ENCODE measurements at regions of chr11 and their contacts with region 1.

Region 1: DNA sequence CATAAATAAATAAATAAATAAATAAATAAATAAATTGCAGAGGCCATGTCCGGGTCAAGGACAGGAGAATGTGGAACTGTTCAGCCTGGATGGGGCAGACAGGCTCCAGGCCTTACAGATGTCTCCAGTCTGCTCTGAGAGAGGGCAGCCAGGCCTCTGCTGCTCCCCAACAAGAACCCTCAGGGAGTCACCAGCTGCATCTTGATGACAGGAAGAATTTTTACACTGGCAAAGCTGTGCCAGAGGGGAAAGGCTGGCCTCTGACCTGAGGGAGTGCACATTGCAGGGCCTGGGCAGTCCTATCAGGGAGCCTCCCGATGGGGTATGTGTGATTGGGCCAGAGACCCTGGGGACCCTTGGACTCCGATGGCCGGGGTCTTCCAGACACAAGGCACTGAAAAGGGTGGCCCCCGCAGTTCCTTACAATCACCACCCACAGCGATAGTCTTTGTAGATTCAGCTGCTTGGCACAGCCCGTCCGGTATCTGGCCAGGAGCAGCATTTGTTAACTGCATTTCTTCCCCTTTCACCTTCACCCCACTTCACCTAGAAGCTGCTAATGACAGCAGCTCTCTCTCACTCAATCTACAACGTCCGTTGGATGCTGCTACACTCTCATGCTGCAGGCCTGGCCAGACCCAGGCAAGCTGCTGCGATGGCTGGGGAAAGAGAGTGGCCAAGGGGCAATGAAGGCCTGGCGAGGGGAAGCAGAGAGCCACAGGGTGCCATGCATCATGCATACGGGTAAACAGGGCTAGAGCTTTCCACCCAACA is 8.1 kb downstream of the MOGAT2 start:
- DNase-seq: no peak
- ATAC-seq: peak; percentile 49

Region 2: GRCh38 chr11:74769055-74769707 is 956.6 kb before region 1 on chr11:
- intact Hi-C with region 1: loop called (anchors 5 kb)
- DNase-seq: no peak
- ATAC-seq: no peak

Region 3: DNA sequence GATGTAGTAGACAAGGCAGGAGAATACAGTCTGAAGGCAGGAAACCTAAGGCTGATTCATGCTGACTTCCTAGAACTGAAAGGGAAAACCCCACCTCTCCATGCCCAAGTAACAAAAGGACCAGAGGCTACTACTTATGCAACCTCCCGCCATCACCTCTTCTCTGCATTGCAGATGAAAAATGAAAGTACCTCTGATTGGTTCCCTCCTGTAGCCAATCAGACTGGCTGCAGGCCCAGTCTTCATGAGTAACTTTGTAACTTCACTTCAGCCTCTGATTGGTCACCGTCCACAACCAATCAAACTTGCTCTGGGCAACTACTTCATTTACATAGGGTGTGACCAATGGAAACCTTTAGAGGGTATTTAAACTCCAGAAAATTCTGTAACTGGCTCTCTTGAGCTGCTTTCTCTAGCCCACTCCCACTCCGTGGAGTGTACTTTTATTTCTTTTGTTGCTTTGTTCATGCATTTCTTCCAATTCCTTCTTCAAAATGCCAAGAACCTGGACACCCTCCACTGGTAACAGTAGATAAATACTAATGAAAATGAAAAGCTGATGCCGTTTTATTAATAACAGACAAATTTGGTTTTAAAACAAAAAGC is 51.7 kb before region 1 on chr11:
- intact Hi-C with region 1: no loop called
- DNase-seq: no peak
- ATAC-seq: no peak

Region 4: DNA sequence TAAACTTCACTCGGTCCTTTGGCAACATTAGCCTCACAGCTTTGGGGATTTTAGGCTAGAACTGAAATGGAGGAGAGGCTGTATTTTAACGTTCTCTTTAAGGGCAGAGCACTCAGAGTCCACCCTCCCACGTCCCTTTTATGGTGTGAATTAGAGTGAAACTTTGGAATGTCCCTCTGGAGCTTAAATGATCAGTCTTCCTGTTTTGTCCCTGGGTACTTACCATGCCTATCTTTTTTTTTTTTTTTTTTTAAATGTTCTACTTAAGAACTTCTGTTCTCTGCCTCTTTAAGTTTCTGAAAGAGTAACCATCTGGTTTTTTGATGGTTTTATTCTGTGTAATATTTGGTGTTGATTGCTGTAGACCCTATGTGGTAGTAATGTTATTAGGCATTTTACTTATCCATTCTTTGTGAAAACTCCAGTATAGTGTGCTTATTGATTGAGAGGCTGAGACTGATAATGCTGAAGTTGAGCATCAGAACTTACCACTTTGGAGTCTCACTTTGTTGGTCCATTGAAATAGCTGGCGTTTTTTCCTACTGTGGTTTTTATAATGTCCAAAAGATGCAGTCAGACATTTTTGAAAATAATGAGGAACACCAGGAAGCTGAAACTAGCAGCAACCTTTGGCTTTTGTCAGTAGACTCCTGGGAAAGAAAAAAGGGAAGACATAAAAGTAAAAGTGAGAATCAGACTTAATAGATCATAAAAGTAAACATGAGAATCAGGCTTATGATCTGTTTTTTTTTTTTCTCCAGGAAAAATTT is 100.9 kb after region 1 on chr11:
- intact Hi-C with region 1: no loop called
- DNase-seq: no peak
- ATAC-seq: peak; percentile 84

Measured in sciatic nerve (tissue), 2 donors.